Posterior vena cava (tissue), 2 donors: ENCODE measurements at regions of chr11 and their contacts with region 1.

Region 1: GRCh38 chr11:110429731-110430266 is at the start of gene FDX1:
- DNase-seq: peak; percentile 94
- total RNA-seq, gene FDX1: 9.7 to 12.4 TPM

Region 2: GRCh38 chr11:110200241-110200640 is 229.6 kb before region 1 on chr11:
- intact Hi-C with region 1: loop called in 1 of 2 experiments (anchors 10 kb)
- DNase-seq: no peak

Region 3: GRCh38 chr11:110327508-110327907 is 102.3 kb before region 1 on chr11:
- intact Hi-C with region 1: no loop called
- DNase-seq: no peak